Vagina (tissue), 2 donors: ENCODE measurements at regions of chrX and their contacts with region 1.

Region 1: GRCh38 chrX:120840827-120841226 is 34.8 kb downstream of the CT47B1 start:
- DNase-seq: no peak
- H3K4me3 ChIP-seq: no peak overlapping the region
- H3K27ac ChIP-seq: no peak overlapping the region
- H3K4me1 ChIP-seq: no peaks in the 10 kb centered on the region
- H3K27me3 ChIP-seq: no peaks in the 10 kb centered on the region
- CTCF ChIP-seq: no peak
- POLR2A ChIP-seq: no peak

Region 2: GRCh38 chrX:119669424-119670037 is 1171.3 kb before region 1 on chrX:
- intact Hi-C with region 1: loop called (anchors 5 kb)
- DNase-seq: no peak
- H3K4me3 ChIP-seq: no peak overlapping the region
- H3K27ac ChIP-seq: no peak overlapping the region
- H3K4me1 ChIP-seq: no peaks in the 10 kb centered on the region
- H3K27me3 ChIP-seq: no peaks in the 10 kb centered on the region
- CTCF ChIP-seq: no peak
- POLR2A ChIP-seq: no peak

Region 3: GRCh38 chrX:120653000-120653399 is 187.8 kb before region 1 on chrX:
- intact Hi-C with region 1: no loop called
- DNase-seq: no peak
- H3K4me3 ChIP-seq: no peak overlapping the region
- H3K27ac ChIP-seq: no peak overlapping the region
- H3K4me1 ChIP-seq: no peaks in the 10 kb centered on the region
- H3K27me3 ChIP-seq: no peaks in the 10 kb centered on the region
- CTCF ChIP-seq: no peak
- POLR2A ChIP-seq: no peak